BJ (cell line): ENCODE measurements at regions of chr15 and their contacts with region 1.

Region 1: GRCh38 chr15:63198371-63199250 is 9.2 kb downstream of the RAB8B start:
- DNase-seq: no peak
- H3K4me3 ChIP-seq: no peak overlapping the region
- H3K27me3 ChIP-seq: no peaks in the 10 kb centered on the region
- CTCF ChIP-seq: no peak

Region 2: GRCh38 chr15:63210151-63211091 is 11.8 kb after region 1 on chr15:
- CTCF ChIA-PET with region 1: interaction called, 12 read pairs
- POLR2A ChIA-PET with region 1: no interaction called
- DNase-seq: no peak
- H3K4me3 ChIP-seq: no peak overlapping the region
- H3K27me3 ChIP-seq: no peaks in the 10 kb centered on the region
- CTCF ChIP-seq: no peak

Region 3: DNA sequence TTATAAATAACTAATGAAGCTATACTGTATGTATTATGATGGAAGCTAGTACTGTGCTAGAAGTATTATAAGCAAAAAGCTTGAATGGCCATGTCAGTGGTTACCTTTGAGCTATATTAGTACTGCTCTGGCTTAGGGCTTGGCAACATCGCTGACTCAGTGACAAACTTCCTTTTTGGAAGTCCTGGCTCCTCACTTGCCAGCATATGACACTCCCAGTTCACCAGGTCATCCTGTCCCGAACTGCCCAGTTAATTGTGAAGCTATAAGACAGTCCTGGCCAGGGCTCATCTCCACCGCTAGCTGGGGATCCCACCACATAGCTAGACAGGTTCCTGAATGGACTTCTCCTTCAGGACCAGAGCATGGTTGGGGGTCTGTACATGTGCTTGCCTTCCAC is 22.7 kb after region 1 on chr15:
- CTCF ChIA-PET with region 1: no interaction called
- POLR2A ChIA-PET with region 1: no interaction called
- DNase-seq: no peak
- H3K4me3 ChIP-seq: no peak overlapping the region
- H3K27me3 ChIP-seq: no peaks in the 10 kb centered on the region
- CTCF ChIP-seq: no peak